Mammary epithelial cell (primary cell): ENCODE measurements at regions of chr10 and their contacts with region 1.

Region 1: DNA sequence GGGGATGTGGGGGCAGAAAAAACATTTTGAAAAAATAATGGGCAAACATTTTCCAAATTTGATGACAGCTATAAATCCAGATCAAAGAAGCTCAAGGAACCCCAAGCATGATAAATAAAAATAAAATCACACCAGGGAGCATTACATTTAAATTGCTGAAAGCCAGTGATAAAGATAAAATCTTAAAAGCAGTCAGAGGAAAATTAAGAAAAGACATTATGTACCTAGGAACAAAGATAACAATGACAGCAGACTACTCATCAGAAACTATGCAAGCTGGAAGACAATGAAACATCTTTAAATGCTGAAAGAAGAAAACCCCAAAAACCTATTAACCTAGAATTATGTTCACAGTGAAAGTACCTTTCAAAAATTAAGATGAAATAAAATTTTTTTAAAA is 23.3 kb downstream of the NEUROG3 start:
- DNase-seq: no peak
- H3K4me3 ChIP-seq: no peak overlapping the region
- H3K27ac ChIP-seq: no peak overlapping the region
- H3K4me1 ChIP-seq: no peaks in the 10 kb centered on the region
- H3K27me3 ChIP-seq: peaks cover 2% of the 10 kb centered on the region
- CTCF ChIP-seq: no peak

Region 2: GRCh38 chr10:69045441-69046300 is 504.3 kb before region 1 on chr10:
- CTCF ChIA-PET with region 1: interaction called, 10 read pairs
- dilution Hi-C with region 1: no loop called
- in situ Hi-C with region 1: no loop called
- intact Hi-C with region 1: no loop called
- DNase-seq: peak; percentile 97
- H3K4me3 ChIP-seq: no peak overlapping the region
- H3K27ac ChIP-seq: peak overlapping the region; percentile 92
- H3K4me1 ChIP-seq: peaks cover 24% of the 10 kb centered on the region
- H3K27me3 ChIP-seq: no peaks in the 10 kb centered on the region
- CTCF ChIP-seq: no peak

Region 3: GRCh38 chr10:69425511-69426298 is 124.3 kb before region 1 on chr10:
- CTCF ChIA-PET with region 1: no interaction called
- dilution Hi-C with region 1: no loop called
- in situ Hi-C with region 1: no loop called
- intact Hi-C with region 1: no loop called
- DNase-seq: peak; percentile 75
- H3K4me3 ChIP-seq: no peak overlapping the region
- H3K27ac ChIP-seq: no peak overlapping the region
- H3K4me1 ChIP-seq: peaks cover 14% of the 10 kb centered on the region
- H3K27me3 ChIP-seq: no peaks in the 10 kb centered on the region
- CTCF ChIP-seq: no peak

Region 4: GRCh38 chr10:69588386-69588785 is 38.4 kb after region 1 on chr10:
- CTCF ChIA-PET with region 1: no interaction called
- dilution Hi-C with region 1: loop called (anchors 5 kb)
- in situ Hi-C with region 1: no loop called
- intact Hi-C with region 1: no loop called
- DNase-seq: no peak
- H3K4me3 ChIP-seq: no peak overlapping the region
- H3K27ac ChIP-seq: no peak overlapping the region
- H3K4me1 ChIP-seq: peaks cover 11% of the 10 kb centered on the region
- H3K27me3 ChIP-seq: peaks cover 2% of the 10 kb centered on the region
- CTCF ChIP-seq: no peak

Region 5: GRCh38 chr10:69649786-69650555 is 100.0 kb after region 1 on chr10:
- CTCF ChIA-PET with region 1: no interaction called
- dilution Hi-C with region 1: loop called (anchors 5 kb)
- in situ Hi-C with region 1: no loop called
- intact Hi-C with region 1: no loop called
- DNase-seq: no peak
- H3K4me3 ChIP-seq: no peak overlapping the region
- H3K27ac ChIP-seq: no peak overlapping the region
- H3K4me1 ChIP-seq: peaks cover under 1% of the 10 kb centered on the region
- H3K27me3 ChIP-seq: no peaks in the 10 kb centered on the region
- CTCF ChIP-seq: peak in 1 of 2 donors; percentile 11

Region 6: GRCh38 chr10:70115948-70116682 is 566.2 kb after region 1 on chr10:
- CTCF ChIA-PET with region 1: no interaction called
- dilution Hi-C with region 1: no loop called
- in situ Hi-C with region 1: no loop called
- intact Hi-C with region 1: no loop called
- DNase-seq: peak; percentile 25
- H3K4me3 ChIP-seq: no peak overlapping the region
- H3K27ac ChIP-seq: no peak overlapping the region
- H3K4me1 ChIP-seq: no peaks in the 10 kb centered on the region
- H3K27me3 ChIP-seq: no peaks in the 10 kb centered on the region
- CTCF ChIP-seq: peak; percentile 83 to 84